Sigmoid colon (tissue), 7 donors: ENCODE measurements at regions of chr11 and their contacts with region 1.

Region 1: GRCh38 chr11:95067039-95067840 is 521 bp downstream of the SRSF8 start:
- DNase-seq: peak; percentile 93
- H3K4me3 ChIP-seq: peak overlapping the region; percentile 71 to 83 (median 80)
- H3K27ac ChIP-seq: peak overlapping the region; percentile 91 to 99 (median 98)
- H3K4me1 ChIP-seq: peaks cover 0 to 20% (median 17%) of the 10 kb centered on the region in 4 donors
- H3K27me3 ChIP-seq: no peaks in the 10 kb centered on the region
- CTCF ChIP-seq: peak; percentile 52 to 74 (median 64)
- EP300 ChIP-seq: no peak
- POLR2A ChIP-seq: peak in 1 of 2 donors; percentile 50

Region 2: DNA sequence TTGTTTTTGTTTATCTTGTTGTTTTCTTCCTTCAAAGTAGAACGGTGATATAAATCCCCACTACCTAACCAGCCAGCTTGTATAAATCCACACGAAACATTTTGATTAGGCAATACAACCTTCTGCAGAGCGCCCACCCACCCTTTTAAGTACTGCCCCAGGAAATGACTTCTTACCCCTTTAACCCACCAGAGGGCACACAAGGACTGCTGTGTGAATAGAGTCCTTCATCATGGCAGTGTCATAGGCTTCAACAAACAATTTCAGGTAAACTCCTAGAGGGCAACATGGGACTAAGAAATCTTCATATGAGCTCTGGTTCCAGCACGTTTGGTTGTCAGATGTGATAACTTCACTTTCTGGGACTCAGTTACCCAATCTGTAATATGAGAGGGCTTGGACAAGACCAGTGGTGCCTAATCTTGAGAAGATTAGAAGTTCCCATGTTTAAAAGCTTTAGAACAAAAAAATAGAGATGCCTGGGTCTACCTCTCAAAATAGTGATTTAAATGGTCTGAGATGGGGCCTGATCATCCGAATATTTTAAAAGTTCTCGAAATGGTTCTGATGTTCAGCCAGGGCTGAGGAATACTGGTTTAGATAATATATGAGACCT is 444.0 kb before region 1 on chr11:
- intact Hi-C with region 1: loop called (anchors 10 kb)
- DNase-seq: no peak
- H3K4me3 ChIP-seq: no peak overlapping the region
- H3K27ac ChIP-seq: no peak overlapping the region
- H3K4me1 ChIP-seq: peaks cover 0 to 5% (median 0%) of the 10 kb centered on the region in 4 donors
- H3K27me3 ChIP-seq: no peaks in the 10 kb centered on the region
- CTCF ChIP-seq: peak; percentile 74 to 90 (median 76)
- EP300 ChIP-seq: no peak
- POLR2A ChIP-seq: no peak

Region 3: GRCh38 chr11:94973099-94973968 is 93.9 kb before region 1 on chr11 and contains the starts of genes CWC15 and KDM4D:
- intact Hi-C with region 1: loop called (anchors 2 kb)
- DNase-seq: peak; percentile 97
- H3K4me3 ChIP-seq: peak within 1 kb of the TSS; percentile 84 to 93 (median 86)
- H3K27ac ChIP-seq: peak within 1 kb of the TSS; percentile 81 to 88 (median 82)
- H3K4me1 ChIP-seq: peaks cover 0 to 14% (median 12%) of the 10 kb centered on the region in 4 donors
- H3K27me3 ChIP-seq: no peaks in the 10 kb centered on the region
- CTCF ChIP-seq: no peak
- EP300 ChIP-seq: no peak
- POLR2A ChIP-seq: peak in 1 of 2 donors; percentile 26
- total RNA-seq, gene CWC15: 39.8 to 69.9 (median 47.3) TPM
- total RNA-seq, gene KDM4D: 0.33 to 0.55 (median 0.36) TPM in 3 of 4 donors, not detected in the other

Region 4: GRCh38 chr11:95150946-95151684 is 83.9 kb after region 1 on chr11:
- intact Hi-C with region 1: loop called (anchors 1 kb)
- DNase-seq: peak; percentile 96
- H3K4me3 ChIP-seq: peak overlapping the region; percentile 39 to 59 (median 51)
- H3K27ac ChIP-seq: peak overlapping the region; percentile 66 to 86 (median 81)
- H3K4me1 ChIP-seq: peaks cover 0 to 45% (median 30%) of the 10 kb centered on the region in 4 donors
- H3K27me3 ChIP-seq: no peaks in the 10 kb centered on the region
- CTCF ChIP-seq: peak; percentile 77 to 94 (median 89)
- EP300 ChIP-seq: no peak
- POLR2A ChIP-seq: no peak

Region 5: GRCh38 chr11:95641495-95641894 is 574.3 kb after region 1 on chr11:
- intact Hi-C with region 1: loop called (anchors 10 kb)
- DNase-seq: no peak
- H3K4me3 ChIP-seq: no peak overlapping the region
- H3K27ac ChIP-seq: peak overlapping the region in 1 of 4 donors; percentile 60
- H3K4me1 ChIP-seq: peaks cover 0 to 2% (median 0%) of the 10 kb centered on the region in 4 donors
- H3K27me3 ChIP-seq: no peaks in the 10 kb centered on the region
- CTCF ChIP-seq: no peak
- EP300 ChIP-seq: no peak
- POLR2A ChIP-seq: no peak

Region 6: GRCh38 chr11:95764267-95764898 is 697.1 kb after region 1 on chr11:
- intact Hi-C with region 1: loop called (anchors 2 kb)
- DNase-seq: no peak
- H3K4me3 ChIP-seq: no peak overlapping the region
- H3K27ac ChIP-seq: no peak overlapping the region
- H3K4me1 ChIP-seq: no peaks in the 10 kb centered on the region
- H3K27me3 ChIP-seq: no peaks in the 10 kb centered on the region
- CTCF ChIP-seq: peak; percentile 59 to 69 (median 60)
- EP300 ChIP-seq: no peak
- POLR2A ChIP-seq: no peak